Ascending aorta (tissue), 2 donors: ENCODE measurements at regions of chr3 and their contacts with region 1.

Region 1: DNA sequence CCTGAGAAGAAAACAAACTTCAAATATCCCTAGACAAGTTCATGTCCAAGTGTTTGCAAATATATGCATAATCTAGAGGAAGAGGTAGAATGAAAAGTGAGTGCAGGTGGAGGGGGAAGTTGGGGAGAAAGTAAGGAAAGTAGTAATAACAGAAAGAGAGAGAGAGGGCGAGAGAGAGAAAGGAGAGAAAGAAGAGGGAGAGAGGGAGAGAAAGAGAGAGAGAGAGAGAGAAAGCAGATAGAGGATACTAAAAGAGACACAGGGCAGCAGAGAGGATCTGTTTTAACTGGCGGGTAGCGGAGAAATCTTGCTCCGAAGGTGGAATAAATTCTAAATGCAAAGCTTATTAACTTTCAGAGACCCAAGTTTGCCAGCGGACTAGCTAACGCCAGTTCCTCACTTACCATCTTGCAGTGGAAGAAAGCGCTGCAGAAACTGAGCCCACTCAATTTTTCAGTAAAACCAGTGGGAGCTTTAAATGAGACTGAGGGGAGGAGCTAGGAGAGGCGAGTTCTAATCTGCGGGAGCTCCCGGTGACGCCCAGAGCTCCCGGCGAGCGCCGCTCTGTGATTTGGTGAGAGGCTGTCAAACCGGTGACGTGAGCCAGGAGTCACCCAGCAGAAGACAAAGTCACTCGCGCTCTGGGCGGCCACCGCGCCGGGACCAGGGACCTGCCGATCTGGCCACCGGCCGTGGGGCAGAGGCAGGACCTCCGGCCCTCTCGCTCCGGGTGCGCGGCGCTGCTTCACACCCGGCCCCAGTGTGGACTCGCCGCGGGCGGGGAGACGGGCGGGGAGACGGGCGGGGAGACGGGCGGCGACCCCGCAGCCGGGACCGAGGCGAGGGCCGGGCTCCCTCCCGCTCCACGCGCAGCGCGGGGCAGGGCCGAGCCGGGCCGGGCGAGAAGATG is at the start of gene GMNC:
- DNase-seq: peak; percentile 46 to 88
- H3K4me3 ChIP-seq: peak within 1 kb of the TSS; percentile 76 to 90
- H3K27ac ChIP-seq: peak within 1 kb of the TSS; percentile 62 to 74
- H3K4me1 ChIP-seq: no peaks in the 10 kb centered on the region
- H3K27me3 ChIP-seq: no peaks in the 10 kb centered on the region
- CTCF ChIP-seq: no peak
- total RNA-seq, gene GMNC: not detected

Region 2: DNA sequence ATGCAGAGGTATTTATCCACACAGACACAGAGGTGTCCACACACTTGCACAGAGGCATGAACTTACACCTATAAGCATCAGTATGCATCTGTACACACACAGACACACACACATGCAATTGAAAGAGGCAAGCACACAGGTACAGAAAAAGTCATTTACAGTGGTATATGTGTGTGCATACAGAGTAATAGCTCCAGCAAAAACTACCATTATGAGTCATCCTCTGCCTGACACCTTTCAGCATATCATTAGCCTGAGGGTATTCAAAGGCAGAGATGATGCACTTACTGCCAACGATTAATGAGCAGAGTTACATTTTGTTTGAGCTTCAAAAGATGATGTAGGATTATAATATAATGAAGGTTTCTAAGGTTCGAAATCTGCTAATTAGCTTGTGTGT is 1791.0 kb before region 1 on chr3:
- intact Hi-C with region 1: loop called (anchors 10 kb)
- DNase-seq: no peak
- H3K4me3 ChIP-seq: no peak overlapping the region
- H3K27ac ChIP-seq: no peak overlapping the region
- H3K4me1 ChIP-seq: no peaks in the 10 kb centered on the region
- H3K27me3 ChIP-seq: no peaks in the 10 kb centered on the region
- CTCF ChIP-seq: no peak